AG04449 (cell line): ENCODE measurements at regions of chr2 and their contacts with region 1.

Region 1: GRCh38 chr2:237413777-237414661 is at the start of gene COL6A3:
- DNase-seq: peak; percentile 81
- H3K4me3 ChIP-seq: peak within 1 kb of the TSS; percentile 95
- CTCF ChIP-seq: no peak

Region 2: GRCh38 chr2:237122214-237122666 is 291.8 kb before region 1 on chr2:
- CTCF ChIA-PET with region 1: interaction called, 30 read pairs
- POLR2A ChIA-PET with region 1: no interaction called
- DNase-seq: no peak
- H3K4me3 ChIP-seq: no peak overlapping the region
- CTCF ChIP-seq: peak; percentile 63

Region 3: GRCh38 chr2:237304763-237305514 is 109.1 kb before region 1 on chr2:
- CTCF ChIA-PET with region 1: no interaction called
- POLR2A ChIA-PET with region 1: no interaction called
- DNase-seq: no peak
- H3K4me3 ChIP-seq: no peak overlapping the region
- CTCF ChIP-seq: no peak

Region 4: DNA sequence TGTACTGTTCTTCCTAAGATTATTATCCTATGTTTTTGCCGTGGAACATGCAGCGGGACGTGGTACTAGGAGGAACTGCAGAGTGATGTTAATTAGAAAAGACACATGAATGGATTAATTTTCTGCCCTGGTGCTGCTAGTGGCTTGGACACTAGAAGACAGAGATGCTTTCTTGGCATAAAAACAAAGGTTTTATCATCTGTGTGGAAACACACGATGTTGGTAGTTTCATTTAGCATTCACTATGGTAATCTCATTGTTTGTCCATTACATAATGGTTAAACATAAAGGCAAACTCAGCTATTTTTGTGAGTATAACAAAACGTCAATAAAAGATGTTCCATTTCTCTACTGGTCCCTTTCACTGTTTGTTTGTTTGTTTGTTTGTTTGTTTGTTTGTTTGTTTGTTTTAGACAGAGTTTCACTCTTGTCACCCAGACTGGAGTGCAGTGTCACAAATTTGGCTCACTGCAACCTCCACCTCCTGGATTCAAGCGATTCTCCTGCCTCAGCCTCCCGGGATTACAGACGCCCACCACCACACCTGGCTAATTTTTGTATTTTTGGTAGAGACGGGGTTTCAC is 22.8 kb before region 1 on chr2:
- CTCF ChIA-PET with region 1: interaction called, 17 read pairs
- POLR2A ChIA-PET with region 1: interaction called, 3 read pairs
- DNase-seq: no peak
- H3K4me3 ChIP-seq: no peak overlapping the region
- CTCF ChIP-seq: no peak

Region 5: GRCh38 chr2:237434866-237435311 is 20.9 kb after region 1 on chr2:
- CTCF ChIA-PET with region 1: interaction called, 200 read pairs
- POLR2A ChIA-PET with region 1: interaction called, 76 read pairs
- DNase-seq: peak; percentile 40
- H3K4me3 ChIP-seq: no peak overlapping the region
- CTCF ChIP-seq: no peak

Region 6: GRCh38 chr2:237456200-237456843 is 42.3 kb after region 1 on chr2:
- CTCF ChIA-PET with region 1: interaction called, 115 read pairs
- POLR2A ChIA-PET with region 1: interaction called, 5 read pairs
- DNase-seq: peak; percentile 59
- H3K4me3 ChIP-seq: no peak overlapping the region
- CTCF ChIP-seq: no peak

Region 7: DNA sequence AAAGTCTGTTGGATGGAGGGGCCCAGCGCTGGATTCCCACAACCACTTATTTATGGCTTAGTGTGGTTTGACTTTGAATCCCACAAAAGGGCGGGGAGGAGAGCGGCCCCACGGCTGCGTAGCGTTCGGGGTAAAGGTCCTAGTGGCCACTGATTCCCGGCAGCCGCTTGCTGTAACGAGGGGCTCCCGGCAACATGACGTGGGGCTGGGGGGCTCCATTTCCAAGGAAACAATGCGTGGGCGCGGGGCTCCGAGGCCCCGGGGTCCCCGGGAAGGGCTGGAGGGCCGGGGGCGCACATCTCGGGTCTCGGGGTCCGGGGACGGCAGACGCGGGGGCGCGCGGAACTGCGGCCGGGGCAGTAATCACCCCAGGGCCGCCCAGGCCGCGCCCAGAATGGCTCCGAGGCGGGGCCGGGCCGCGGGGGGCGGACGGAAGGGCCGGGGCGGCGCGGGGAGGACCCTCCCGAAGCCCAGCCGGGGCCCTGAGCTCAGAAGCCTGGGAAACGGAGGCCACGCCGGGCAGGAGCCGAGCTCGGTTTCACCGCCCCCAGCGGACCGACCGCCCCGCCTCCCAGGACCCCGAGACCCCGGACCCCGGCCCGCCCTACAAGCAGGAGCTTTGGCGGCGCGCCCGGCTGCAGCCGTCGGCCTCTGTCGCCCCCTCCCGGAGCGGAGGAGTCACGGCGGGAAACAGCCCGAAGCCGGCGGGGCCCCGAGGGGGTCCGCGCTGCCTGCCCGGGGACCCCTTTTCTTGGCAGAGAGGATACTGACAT is 61.1 kb after region 1 on chr2:
- CTCF ChIA-PET with region 1: interaction called, 111 read pairs
- POLR2A ChIA-PET with region 1: interaction called, 23 read pairs
- DNase-seq: no peak
- H3K4me3 ChIP-seq: peak overlapping the region; percentile 56
- CTCF ChIP-seq: peak; percentile 93

Region 8: DNA sequence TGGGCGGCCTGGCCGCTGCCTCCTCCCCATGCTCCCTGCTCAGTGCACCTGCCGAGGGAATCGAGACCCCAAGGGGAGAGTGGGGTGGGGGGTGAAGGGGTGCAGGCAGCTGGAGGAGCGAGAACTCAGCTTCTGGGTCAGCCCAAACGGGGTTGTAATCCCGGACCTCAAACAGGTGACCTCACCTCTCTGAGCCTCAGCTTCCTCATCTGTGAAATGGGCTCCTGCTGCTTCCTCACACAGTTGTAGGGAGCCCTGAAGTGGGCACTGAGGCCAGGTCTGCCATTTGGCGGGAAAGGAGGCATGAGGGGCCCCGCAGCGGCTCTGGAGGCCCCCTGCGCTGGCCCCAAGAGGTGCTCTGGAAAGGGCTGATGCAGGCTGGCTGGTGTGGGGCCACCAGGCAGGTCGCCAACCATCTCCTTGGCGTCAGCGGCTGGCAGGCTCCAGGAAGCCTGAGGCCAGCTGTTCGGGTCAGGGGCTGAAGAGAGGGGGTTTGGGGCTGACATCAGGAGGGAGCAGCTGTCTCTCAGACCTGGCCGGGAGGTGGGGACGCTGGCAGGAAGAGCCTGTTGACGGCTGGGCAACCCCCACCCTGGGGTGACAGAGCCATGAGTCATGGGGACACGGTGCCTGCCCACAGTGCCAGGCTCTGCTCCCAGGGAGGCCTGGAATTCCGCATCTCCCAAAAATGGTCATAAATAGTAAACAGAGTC is 729.4 kb after region 1 on chr2:
- CTCF ChIA-PET with region 1: no interaction called
- POLR2A ChIA-PET with region 1: no interaction called
- DNase-seq: peak; percentile 17
- H3K4me3 ChIP-seq: no peak overlapping the region
- CTCF ChIP-seq: no peak